OCI-LY7 (cell line): ENCODE measurements at regions of chr1 and their contacts with region 1.

Region 1: DNA sequence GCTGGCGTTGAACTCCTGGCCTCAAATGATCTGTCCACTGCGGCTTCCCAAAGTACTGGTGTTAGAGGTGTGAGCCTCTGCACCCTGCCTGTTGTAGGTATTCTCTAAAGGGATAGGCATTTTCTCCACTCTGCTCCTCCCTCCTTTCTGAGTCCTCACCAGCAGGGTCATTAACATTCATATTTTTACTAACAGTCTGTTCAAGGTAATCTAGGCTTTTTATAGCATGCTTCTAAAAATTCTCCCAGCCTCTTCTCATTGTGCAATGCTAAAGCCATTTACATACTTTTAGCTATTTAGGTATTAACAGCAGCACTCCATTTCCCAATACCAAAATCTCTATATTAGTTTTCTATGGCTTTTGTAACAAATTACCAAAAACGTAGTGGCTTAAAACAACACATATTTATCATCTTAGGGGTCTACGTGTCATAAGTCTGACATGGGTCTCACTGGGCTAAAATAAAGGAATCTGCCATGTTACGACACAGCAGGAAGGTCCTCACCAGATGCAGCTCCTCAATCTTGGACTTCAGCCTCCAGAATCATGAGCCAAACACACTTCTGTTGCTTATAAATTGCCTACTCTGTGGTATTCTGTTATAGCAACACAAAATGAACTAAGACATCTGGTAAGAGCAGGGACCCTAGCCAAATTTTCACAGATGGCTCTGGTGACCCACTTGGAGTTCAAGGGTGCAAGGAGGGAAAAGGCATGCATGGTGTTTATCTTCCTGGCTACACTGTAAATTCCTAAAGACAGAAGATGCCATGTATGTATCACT is 2.9 kb upstream of the SLC2A7 start:
- DNase-seq: no peak
- H3K4me3 ChIP-seq: no peak overlapping the region
- H3K27ac ChIP-seq: no peak overlapping the region
- H3K4me1 ChIP-seq: peaks cover 20% of the 10 kb centered on the region
- CTCF ChIP-seq: no peak

Region 2: DNA sequence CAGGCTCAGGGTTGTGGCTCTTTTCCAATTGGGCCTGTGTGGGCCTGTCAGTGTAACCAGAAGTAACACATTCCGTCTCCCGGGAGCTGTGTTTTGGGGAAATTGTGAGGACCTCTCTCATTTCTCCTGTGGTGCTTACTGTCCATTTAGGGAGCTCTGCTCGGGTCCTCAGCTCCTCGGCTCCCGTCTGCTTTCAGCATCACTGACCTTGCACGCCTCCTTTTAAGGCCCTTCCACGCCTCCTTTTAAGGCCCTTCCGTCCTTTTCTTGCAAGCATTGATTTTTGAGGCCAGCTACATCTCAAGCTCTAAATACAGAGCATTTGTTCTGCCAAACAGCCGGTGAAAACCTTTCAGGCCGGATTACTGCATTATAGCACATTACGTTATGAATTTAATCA is 73.7 kb before region 1 on chr1:
- CTCF ChIA-PET with region 1: interaction called, 16 read pairs
- POLR2A ChIA-PET with region 1: no interaction called
- intact Hi-C with region 1: no loop called
- DNase-seq: no peak
- H3K4me3 ChIP-seq: no peak overlapping the region
- H3K27ac ChIP-seq: no peak overlapping the region
- H3K4me1 ChIP-seq: no peaks in the 10 kb centered on the region
- CTCF ChIP-seq: no peak

Region 3: GRCh38 chr1:9004700-9005394 is 24.3 kb before region 1 on chr1:
- CTCF ChIA-PET with region 1: no interaction called
- POLR2A ChIA-PET with region 1: no interaction called
- intact Hi-C with region 1: no loop called
- DNase-seq: peak; percentile 88
- H3K4me3 ChIP-seq: no peak overlapping the region
- H3K27ac ChIP-seq: no peak overlapping the region
- H3K4me1 ChIP-seq: peaks cover 41% of the 10 kb centered on the region
- CTCF ChIP-seq: peak; percentile 96